T-cell (primary cell): ENCODE measurements at regions of chr22 and their contacts with region 1.

Region 1: DNA sequence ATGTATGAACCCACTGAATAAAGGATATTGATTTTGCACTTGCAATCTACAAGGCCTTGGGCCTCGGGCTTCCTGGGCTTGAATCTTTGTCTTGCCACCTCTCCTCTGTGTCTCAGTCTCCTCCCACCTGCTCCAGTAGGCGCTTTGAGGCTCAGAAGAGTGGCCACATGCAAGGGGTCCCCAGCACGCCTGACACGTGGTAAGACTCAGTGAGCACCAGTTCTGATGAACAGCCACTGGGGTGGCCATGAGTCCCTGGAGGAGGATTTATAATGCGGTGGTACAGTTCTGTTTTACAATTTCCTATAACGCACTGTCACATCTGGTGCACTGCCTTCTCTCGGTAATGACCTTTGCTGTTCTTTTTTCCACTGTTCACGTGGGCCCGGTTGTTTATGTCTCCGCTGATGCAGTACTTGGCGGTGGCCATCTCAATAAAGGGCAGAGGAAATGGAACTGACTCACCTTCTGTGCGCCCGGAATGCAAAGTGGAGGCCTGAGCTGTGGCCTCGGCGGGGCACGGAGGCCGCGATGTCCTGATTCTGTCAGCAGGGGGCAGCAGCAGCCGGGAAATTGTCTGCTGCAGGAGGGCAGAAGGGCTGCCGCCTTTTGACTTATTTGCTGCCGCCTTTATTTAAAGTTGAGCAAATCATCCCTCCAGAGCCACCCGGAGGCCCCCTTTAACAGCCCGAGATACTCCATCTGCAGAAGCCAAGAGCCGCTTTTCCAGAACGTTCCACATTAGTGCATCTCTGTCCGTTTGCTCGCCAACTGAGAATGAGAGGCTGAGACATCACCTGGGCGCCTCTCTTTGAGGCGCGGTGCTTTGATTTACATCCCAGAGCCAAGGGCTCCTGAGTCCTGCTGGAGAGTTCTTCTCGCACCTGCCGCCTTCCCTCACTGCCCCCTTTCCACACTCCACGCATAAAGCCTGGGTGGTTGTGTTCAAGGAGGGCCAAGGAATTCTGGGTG is 6.0 kb upstream of the IFT27 start:
- DNase-seq: peak; percentile 60 to 93 (median 78)
- ATAC-seq: peak; percentile 93 to 97 (median 96)
- H3K4me3 ChIP-seq: no peak overlapping the region
- H3K4me3 Mint-ChIP-seq: peak overlapping the region in 1 of 3 donors; percentile 18
- H3K27ac ChIP-seq: no peak overlapping the region
- H3K27ac Mint-ChIP-seq: peak overlapping the region; percentile 77 to 83
- H3K4me1 ChIP-seq: peaks cover 4 to 14% of the 10 kb centered on the region in 2 experiments
- H3K4me1 Mint-ChIP-seq: peaks cover 13 to 25% (median 23%) of the 10 kb centered on the region in 3 donors
- H3K27me3 ChIP-seq: peaks cover 0 to 22% of the 10 kb centered on the region in 2 experiments
- H3K27me3 Mint-ChIP-seq: peaks cover 9 to 20% of the 10 kb centered on the region in 2 donors

Region 2: DNA sequence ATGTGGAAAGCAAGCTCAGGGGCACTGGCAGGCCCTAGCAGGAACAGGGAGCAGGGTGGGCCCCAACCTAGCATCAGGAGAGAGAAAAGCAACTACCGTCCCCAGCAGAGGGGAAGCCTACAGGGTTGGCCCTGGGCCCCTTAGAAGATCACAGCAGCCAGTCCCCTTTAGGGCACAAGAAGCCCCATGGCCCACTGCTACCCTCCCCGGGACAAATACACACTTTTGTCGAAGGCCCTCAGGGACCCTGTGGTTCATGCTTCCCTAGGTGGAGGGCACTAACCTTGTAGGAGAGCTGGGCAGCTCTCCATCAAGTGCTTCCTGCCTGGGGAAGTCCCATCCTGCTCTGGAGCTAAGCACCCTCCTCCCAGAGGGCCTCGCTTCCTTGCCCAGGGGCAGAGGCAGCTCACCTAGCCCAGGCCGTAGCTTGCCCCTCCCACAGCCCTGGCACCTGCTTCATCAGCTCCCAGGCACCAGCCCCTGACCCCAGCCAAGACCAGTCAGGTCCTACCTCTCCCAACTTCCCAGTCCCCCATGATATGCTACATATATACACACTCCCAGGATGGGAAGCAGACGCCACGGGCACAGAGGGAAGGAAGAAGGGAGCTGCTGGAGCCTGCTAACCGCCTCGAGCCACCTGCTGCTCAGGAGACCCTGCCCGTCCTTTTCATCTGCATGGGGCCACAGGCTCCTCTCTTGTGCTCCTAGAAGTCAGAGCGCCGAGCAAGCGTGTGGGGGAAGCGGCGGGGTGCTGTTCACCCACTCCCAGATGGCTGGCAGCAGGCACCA is 1953.7 kb after region 1 on chr22:
- CTCF ChIA-PET with region 1: no interaction called
- POLR2A ChIA-PET with region 1: interaction called in 1 of 2 experiments, 12 read pairs
- DNase-seq: peak in 1 of 35 experiments; percentile 45
- ATAC-seq: peak in 2 of 4 experiments; percentile 15 to 28
- H3K4me3 ChIP-seq: no peak overlapping the region
- H3K4me3 Mint-ChIP-seq: peak overlapping the region in 1 of 3 donors; percentile 18
- H3K27ac ChIP-seq: peak overlapping the region; percentile 14
- H3K27ac Mint-ChIP-seq: peak overlapping the region; percentile 83 to 89
- H3K4me1 ChIP-seq: peaks cover 0 to 94% of the 10 kb centered on the region in 2 experiments
- H3K4me1 Mint-ChIP-seq: peaks cover 60 to 70% (median 61%) of the 10 kb centered on the region in 3 donors
- H3K27me3 ChIP-seq: no peaks in the 10 kb centered on the region
- H3K27me3 Mint-ChIP-seq: peaks cover 0 to 1% of the 10 kb centered on the region in 2 donors